Cardiac septum (tissue), 1 donor: ENCODE measurements at regions of chr12 and their contacts with region 1.

Region 1: DNA sequence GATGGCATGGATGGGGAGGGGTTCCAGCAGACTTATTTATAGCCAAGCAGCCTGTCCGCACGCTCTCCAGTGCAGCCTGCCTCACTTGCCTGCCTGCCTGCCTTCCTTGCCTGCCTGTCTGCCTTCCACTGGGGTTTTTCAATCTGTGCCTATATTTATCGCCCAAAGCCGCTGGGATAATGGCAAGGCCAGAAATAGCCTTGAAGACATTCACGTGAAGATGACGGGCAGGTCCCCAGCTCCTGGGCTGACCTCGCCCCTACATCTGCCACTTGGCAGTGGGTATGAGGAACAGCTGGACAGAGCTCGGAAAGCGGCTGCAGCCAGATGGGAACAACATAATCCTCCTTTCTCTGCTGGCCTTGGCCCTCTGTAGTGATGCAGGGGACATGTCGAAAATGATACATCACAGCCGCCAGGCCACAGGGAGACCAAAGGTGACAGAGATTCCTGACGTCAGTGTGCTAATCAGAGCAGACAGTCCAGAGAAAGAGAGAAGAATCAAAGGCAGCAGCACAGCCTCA is 53.3 kb downstream of the PITPNM2 start:
- DNase-seq: peak; percentile 87

Region 2: DNA sequence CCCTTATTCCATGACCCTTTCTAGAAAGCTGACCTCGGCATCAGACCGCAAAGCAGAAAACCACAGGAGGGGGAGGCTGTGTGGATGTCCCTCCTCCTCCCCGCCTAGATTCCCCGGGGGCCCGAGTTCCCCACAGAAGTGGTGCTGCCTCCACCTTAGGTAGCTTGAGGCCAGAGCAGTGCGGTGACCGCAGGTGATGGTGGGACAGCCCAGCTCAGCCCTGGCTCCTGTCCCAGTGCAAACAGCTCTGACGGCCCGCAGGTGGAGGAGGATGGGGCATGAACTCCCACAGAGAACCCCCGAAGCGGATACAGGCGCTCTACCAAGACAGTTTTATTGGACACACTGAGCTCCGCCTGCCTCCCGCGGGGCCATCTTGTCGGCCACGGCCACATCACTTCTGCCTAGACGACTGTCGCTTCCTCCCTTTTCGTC is 97.6 kb before region 1 on chr12:
- intact Hi-C with region 1: no loop called
- DNase-seq: no peak

Region 3: DNA sequence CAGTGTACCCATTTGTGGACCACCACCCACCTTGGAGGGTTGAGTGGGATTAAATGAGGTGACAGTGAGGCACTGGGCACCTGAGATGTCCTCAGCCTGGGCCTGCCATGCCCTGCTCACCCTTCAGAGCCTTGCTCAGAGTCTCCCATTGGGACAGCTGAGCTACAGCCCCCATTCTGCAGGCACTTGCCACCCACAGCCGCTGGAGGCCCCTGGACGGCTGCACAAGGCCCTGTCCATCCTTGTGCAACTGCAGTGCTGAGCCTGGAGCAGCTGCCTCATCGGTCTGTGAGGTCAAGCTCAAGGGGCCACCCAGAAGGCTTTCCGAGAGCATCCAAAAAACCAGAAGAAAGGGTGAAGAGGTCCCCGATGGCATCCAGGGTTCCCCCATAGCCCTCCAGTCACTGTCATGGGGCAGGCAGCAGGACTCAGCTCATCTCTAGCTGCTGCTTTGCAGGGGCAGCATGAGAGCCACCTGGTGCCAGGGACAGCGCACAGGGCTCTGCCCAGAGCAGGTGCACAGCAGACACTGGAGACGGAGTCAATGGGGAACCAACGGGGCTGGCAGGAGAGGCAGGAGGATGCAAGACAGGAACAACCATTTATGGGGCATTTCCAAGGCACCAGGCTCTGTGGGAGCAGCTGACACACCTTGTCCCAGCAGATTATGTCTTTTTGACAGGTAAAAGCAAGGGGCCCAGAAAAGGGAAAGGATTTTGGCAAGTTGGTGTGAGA is 32.6 kb before region 1 on chr12:
- intact Hi-C with region 1: loop called (anchors 2 kb)
- DNase-seq: no peak

Region 4: DNA sequence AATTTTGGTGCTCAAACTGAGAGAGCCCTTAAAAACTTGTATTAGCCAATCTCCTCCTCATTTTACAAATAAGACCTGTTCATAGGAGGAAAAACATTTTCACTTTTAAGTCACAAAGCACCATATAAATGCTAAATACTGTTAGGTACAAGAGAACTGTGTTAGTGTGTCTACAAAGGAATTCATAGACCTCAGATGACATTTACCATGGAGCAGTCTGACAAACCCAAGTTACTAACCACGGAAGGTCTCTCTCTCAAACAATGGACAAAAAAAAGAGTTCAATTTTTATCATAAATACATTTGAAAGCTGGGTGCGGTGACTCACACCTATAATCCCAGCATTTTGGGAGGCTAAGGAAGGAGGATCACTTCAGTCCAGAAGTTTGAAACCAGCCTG is 257.0 kb after region 1 on chr12:
- intact Hi-C with region 1: no loop called
- DNase-seq: no peak